PC-3 (cell line): ENCODE measurements at regions of chr6 and their contacts with region 1.

Region 1: GRCh38 chr6:156102129-156102528 is 646.5 kb upstream of the NOX3 start:
- DNase-seq: peak; percentile 58
- ATAC-seq: peak; percentile 64; the same call in 1 of the 2 replicates
- H3K4me3 ChIP-seq: no peak overlapping the region
- H3K27ac ChIP-seq: no peak overlapping the region
- H3K4me1 ChIP-seq: no peaks in the 10 kb centered on the region
- H3K27me3 ChIP-seq: no peaks in the 10 kb centered on the region
- CTCF ChIP-seq: peak; percentile 63

Region 2: GRCh38 chr6:155832596-155832995 is 269.5 kb before region 1 on chr6:
- CTCF ChIA-PET with region 1: no interaction called
- POLR2A ChIA-PET with region 1: no interaction called
- intact Hi-C with region 1: loop called (anchors 5 kb)
- DNase-seq: peak; percentile 50
- ATAC-seq: peak; percentile 88
- H3K4me3 ChIP-seq: no peak overlapping the region
- H3K27ac ChIP-seq: no peak overlapping the region
- H3K4me1 ChIP-seq: no peaks in the 10 kb centered on the region
- H3K27me3 ChIP-seq: no peaks in the 10 kb centered on the region
- CTCF ChIP-seq: peak; percentile 45

Region 3: DNA sequence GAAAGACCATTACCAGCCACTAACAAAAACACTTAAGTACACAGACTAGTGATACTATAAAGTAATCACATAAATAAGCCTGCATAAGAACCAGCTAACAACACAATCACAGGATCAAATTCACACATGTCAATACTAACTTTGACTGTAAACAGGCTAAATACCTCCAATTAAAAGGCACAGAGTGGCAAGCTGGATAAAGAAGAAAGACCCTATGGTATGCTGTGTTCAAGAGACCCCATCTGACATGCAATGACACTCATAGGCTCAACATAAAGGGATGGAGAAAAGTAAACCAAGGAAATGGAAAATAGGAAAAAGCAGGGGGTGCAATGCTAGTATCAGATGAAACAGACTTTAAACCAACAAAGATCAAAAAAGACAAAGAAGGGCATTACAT is 14.6 kb before region 1 on chr6:
- CTCF ChIA-PET with region 1: no interaction called
- POLR2A ChIA-PET with region 1: no interaction called
- intact Hi-C with region 1: no loop called
- DNase-seq: no peak
- ATAC-seq: no peak
- H3K4me3 ChIP-seq: no peak overlapping the region
- H3K27ac ChIP-seq: no peak overlapping the region
- H3K4me1 ChIP-seq: no peaks in the 10 kb centered on the region
- H3K27me3 ChIP-seq: no peaks in the 10 kb centered on the region
- CTCF ChIP-seq: no peak

Region 4: GRCh38 chr6:156167625-156168071 is 65.5 kb after region 1 on chr6:
- CTCF ChIA-PET with region 1: no interaction called
- POLR2A ChIA-PET with region 1: no interaction called
- intact Hi-C with region 1: no loop called
- DNase-seq: no peak
- ATAC-seq: no peak
- H3K4me3 ChIP-seq: no peak overlapping the region
- H3K27ac ChIP-seq: no peak overlapping the region
- H3K4me1 ChIP-seq: no peaks in the 10 kb centered on the region
- H3K27me3 ChIP-seq: no peaks in the 10 kb centered on the region
- CTCF ChIP-seq: no peak